Posterior cingulate gyrus (tissue), 11 donors: ENCODE measurements at regions of chr12 and their contacts with region 1.

Region 1: GRCh38 chr12:120713861-120714482 is 3.7 kb downstream of the UNC119B start:
- DNase-seq: peak in 6 of 10 donors; percentile 56 to 93 (median 70)

Region 2: DNA sequence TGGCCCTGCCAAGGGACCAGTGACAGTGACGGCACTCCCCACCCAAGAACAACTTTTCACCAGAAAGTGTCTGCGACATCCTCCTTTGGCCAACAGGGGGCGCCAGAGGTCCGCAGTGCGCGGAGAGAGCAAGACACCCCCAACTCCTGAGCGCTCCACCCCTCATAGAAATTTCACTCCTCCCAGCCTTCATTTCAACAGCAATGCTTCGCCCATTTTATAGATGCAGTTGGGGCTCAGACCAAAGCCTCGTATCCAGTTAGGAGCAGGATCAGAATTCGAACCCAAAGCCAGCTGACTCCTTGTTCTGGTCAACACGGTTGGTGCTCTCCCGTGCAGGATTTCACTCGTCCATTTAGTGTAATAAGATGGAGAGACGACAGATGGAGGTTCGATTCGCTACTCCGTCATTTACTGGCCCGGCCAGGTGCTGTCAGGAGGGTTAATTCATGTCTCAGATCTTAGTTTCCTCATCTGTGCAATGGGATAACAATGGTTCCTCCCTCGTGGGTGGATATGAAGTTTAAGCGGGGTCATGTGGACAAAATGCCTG is 130.4 kb before region 1 on chr12:
- intact Hi-C with region 1: loop called (anchors 1 kb)
- DNase-seq: peak; percentile 62 to 97 (median 82)

Region 3: DNA sequence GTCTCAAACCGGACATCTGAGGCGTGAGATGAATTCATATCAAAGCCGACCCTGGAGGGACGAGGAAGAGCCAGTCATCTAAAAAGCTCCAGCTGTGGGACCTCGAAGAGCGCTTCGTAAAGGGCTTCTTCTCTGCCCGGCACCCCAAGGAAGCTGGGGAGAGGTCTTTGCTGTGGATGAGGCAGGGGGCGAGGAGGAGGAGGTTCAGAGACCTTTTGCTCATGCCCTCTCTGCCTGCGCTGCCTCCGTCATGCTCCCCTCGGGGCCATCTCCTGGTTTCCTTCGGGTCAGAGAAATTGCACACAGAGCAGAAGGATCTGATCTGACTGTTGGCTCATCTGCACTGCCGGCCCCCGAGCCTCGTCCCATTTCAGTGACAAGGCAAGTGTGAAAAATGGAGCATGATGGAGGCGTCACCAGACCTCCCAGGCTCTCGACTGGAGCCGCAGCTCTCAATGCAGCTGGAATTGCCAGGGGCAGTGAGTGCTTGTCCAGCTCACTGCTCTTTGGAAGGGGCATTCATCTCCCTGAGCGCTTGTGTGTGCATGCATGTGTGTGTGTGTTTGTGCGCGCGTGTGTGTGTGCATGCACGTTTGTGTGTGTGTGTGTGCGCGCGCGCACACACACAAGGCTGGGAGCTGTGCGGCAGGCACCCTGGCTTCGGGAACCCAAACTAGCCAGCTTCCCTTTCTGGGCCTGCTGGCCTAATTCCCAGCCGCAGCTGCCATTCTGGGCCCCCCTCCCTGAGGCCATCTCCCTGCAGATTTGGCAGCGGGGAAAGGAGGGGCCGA is 64.3 kb before region 1 on chr12:
- intact Hi-C with region 1: loop called (anchors 1 kb)
- DNase-seq: peak in 6 of 10 donors; percentile 45 to 91 (median 72)

Region 4: GRCh38 chr12:120686690-120687577 is 27.0 kb before region 1 on chr12 and contains the start of gene MLEC:
- intact Hi-C with region 1: loop called (anchors 2 kb)
- DNase-seq: peak; percentile 97 to 100 (median 99)